ENCODE measurements at regions of chr5 and their contacts with region 1.

Region 1: GRCh38 chr5:178626484-178627258 is at the start of gene CLK4:
- DNase-seq: peak; percentile 98
- H3K4me3 ChIP-seq: peak within 1 kb of the TSS; percentile 62 to 95 (median 88)
- H3K27ac ChIP-seq: peak within 1 kb of the TSS; percentile 91 to 99 (median 98)
- H3K4me1 ChIP-seq: peaks cover 0 to 35% (median 31%) of the 10 kb centered on the region in 4 donors
- H3K27me3 ChIP-seq: no peaks in the 10 kb centered on the region
- CTCF ChIP-seq: no peak
- EP300 ChIP-seq: peak in 1 of 4 donors; percentile 3
- POLR2A ChIP-seq: peak; percentile 17 to 44
- total RNA-seq, gene CLK4: 31.8 to 51.8 (median 40.3) TPM

Region 2: DNA sequence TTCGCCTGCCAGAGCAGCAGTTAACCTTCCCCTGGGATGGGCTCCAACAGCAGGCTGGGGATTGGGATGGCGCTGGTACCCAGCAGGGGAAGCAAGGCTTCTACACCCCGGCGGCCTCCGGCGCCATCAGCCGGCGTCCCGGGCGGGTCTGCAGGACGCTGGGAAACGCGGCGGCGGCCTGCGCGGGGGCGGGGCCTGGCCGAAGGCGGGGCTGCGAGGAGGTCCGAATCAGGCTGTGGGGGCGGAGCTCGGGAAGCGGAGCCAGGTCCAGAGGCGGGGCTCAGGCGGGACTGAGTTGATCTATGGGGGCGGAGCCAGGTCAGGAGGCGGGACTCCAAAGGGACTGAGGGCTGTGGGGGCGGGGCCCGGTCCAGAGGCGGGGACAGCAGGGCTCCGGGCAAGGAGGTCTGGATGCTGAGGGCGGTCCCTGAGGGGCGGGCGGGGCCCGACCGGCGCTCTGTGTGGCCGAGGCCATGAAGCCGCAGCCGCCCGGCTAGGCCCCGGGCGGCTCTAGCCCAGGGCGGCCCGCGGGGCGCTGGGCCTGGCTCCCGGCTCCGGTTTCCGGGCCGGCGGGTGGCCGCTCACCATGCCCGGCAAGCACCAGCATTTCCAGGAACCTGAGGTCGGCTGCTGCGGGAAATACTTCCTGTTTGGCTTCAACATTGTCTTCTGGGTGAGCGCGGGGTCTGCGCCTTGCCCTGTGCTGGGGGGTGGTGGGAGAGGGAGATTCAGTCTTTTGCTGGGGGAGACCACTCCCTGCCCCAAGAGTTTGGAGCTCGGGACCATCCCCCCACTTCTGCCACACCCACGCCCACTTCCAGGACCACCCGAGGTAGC is 1979.4 kb before region 1 on chr5 and contains the start of gene TSPAN17:
- intact Hi-C with region 1: loop called (anchors 5 kb)
- DNase-seq: peak; percentile 100
- H3K4me3 ChIP-seq: peak within 1 kb of the TSS; percentile 61 to 85 (median 70)
- H3K27ac ChIP-seq: peak within 1 kb of the TSS; percentile 79 to 82 (median 82)
- H3K4me1 ChIP-seq: peaks cover 0 to 22% (median 20%) of the 10 kb centered on the region in 4 donors
- H3K27me3 ChIP-seq: no peaks in the 10 kb centered on the region
- CTCF ChIP-seq: peak in 1 of 4 experiments; percentile 11
- EP300 ChIP-seq: peak in 1 of 4 donors; percentile 9
- POLR2A ChIP-seq: peak; percentile 11 to 25
- total RNA-seq, gene TSPAN17: 7.4 to 22.4 (median 9.7) TPM

Region 3: GRCh38 chr5:178732281-178732680 is 105.6 kb after region 1 on chr5:
- intact Hi-C with region 1: loop called (anchors 2 kb)
- DNase-seq: no peak
- H3K4me3 ChIP-seq: no peak overlapping the region
- H3K27ac ChIP-seq: no peak overlapping the region
- H3K4me1 ChIP-seq: peaks cover 0 to 12% (median 7%) of the 10 kb centered on the region in 4 donors
- H3K27me3 ChIP-seq: no peaks in the 10 kb centered on the region
- CTCF ChIP-seq: no peak
- EP300 ChIP-seq: no peak
- POLR2A ChIP-seq: no peak

Region 4: DNA sequence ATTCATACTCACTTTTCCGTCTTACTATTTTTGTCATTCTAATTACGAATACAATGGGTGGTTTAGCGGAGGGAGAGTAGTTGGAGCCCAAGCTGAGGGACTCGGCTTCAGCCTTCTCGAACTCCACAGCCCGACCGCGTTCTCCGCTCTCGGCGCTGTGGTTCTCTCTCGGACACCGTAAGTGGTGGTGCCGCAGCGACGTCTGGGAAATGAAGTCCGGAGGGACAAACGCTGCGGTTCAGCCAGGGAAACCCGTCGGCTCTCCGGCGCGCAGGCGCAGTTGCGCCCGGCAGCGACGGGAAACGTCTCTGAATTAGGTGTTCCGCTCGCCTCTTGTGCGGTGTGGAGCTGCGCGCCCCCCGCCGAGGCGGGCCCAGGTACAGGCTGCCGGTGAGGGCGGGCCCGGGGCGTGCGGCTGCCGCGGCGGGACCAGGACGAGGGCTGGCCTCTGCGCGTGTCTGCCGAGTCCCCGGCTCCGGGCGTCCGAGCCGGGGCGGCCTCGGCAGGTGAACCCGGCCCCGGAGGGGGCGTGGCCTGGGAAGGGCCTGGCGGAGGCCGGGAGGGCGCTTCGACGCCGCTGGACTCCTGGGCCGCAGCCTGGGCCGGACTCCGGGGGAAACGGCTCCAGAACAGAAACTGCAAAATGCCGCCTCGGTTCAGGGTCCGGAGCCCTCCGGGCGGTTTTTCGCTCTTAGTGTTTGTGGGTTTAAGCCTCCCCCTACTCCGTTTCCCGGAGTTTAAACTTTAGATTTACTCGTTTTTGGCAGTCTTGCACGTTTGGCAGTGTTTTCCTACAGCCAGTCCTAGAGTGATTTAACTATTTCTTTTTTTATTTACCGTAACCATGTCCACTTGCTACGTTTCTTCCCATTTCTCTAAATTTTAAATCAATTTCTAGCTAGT is 397.1 kb after region 1 on chr5 and contains the start of gene ZNF879:
- intact Hi-C with region 1: loop called (anchors 10 kb)
- DNase-seq: peak; percentile 97
- H3K4me3 ChIP-seq: peak within 1 kb of the TSS; percentile 43 to 97 (median 86)
- H3K27ac ChIP-seq: peak within 1 kb of the TSS; percentile 84 to 89 (median 88)
- H3K4me1 ChIP-seq: peaks cover 0 to 11% (median 8%) of the 10 kb centered on the region in 4 donors
- H3K27me3 ChIP-seq: no peaks in the 10 kb centered on the region
- CTCF ChIP-seq: no peak
- EP300 ChIP-seq: no peak
- POLR2A ChIP-seq: no peak
- total RNA-seq, gene ZNF879: 2.8 to 6.3 (median 4.7) TPM

Region 5: DNA sequence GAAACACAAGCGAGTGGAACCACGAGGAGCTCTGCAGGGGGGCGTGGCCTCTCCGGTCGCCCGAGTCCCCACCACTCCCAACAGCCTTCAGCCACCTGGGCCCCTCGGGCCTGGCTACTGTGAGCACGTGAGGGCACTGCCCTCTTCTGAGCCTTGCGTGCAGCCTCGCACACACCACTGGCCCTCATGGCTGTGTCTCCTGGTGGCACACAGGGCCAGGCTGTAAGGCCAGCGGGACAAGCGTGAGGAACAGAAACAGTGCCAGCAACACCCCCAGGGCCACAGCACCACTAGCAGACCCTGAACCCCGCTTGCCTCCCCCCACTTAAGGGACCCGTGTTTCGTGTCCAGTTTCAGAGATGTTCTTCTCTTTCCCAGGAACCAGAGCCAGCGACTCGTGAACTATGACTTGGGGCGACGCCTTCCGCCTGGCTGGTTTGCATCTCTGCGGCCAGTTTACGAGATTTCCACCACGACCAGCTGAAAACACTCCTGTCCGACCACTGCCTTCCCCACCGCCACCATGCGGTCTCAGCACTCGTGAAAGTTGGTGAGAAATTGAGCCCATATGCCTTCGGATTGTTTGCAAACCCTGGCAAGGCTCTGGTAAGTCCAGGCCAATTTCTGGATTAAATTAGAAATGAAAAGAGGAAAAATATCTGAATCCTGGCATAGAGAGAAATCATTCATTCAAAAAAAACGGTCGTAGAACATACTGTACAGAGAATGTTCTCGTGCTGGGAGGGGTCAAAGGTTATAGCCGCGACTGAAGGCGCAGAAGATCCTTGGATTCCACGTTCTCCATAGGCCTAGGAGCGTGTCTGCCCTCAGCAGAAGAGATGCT is 569.1 kb after region 1 on chr5:
- intact Hi-C with region 1: no loop called
- DNase-seq: peak; percentile 54
- H3K4me3 ChIP-seq: no peak overlapping the region
- H3K27ac ChIP-seq: no peak overlapping the region
- H3K4me1 ChIP-seq: no peaks in the 10 kb centered on the region
- H3K27me3 ChIP-seq: no peaks in the 10 kb centered on the region
- CTCF ChIP-seq: no peak
- EP300 ChIP-seq: no peak
- POLR2A ChIP-seq: no peak

Region 6: DNA sequence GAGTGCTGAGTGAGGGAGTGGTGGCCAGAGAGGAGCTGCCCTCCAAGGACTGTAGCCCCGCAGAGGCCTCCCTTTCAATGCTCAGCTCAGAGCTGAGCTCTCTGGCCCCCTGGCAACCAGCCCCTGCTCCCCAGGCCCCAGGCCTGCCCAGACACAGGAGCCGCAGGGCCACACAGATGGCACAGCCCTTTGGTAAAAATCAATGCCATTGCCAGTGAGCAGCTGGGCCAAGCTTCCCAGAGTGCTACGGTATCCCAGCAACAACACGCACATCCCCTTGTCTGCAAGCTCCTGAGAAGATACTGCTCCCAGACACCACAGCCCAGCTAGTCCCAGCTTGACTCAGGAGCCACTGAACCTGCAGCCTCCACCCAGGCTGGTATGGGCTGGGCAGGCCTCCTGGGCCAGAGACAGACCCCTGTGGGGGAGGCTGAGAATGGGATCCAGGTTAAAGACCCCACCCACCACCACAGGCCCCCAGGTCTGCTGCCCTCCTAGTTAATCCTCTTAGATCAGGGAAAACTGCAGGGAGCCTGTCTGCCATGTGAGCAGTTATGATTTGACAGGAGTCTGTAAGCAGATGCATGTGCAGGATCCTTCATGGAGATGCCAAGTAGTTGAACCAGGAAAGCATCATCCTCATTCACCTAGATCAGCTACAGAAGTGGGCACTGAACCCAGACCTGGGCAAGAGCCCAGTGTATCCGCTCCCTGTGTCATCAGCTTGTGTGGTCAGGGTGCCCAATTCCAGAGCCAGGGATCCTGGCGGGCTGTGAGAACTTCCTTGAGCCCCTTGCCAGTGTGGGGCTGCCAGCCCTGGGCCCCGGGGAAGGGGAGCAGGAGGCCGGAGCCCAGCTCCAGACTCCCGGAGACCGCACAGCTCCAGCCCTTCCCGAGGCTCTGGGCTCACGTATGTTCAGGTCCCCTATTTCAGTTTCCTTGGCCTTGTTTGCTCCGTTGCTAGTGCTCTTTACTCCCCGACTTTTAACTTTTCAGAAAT is 745.3 kb after region 1 on chr5:
- intact Hi-C with region 1: no loop called
- DNase-seq: peak; percentile 48
- H3K4me3 ChIP-seq: no peak overlapping the region
- H3K27ac ChIP-seq: no peak overlapping the region
- H3K4me1 ChIP-seq: no peaks in the 10 kb centered on the region
- H3K27me3 ChIP-seq: no peaks in the 10 kb centered on the region
- CTCF ChIP-seq: no peak
- EP300 ChIP-seq: no peak
- POLR2A ChIP-seq: no peak

Region 7: DNA sequence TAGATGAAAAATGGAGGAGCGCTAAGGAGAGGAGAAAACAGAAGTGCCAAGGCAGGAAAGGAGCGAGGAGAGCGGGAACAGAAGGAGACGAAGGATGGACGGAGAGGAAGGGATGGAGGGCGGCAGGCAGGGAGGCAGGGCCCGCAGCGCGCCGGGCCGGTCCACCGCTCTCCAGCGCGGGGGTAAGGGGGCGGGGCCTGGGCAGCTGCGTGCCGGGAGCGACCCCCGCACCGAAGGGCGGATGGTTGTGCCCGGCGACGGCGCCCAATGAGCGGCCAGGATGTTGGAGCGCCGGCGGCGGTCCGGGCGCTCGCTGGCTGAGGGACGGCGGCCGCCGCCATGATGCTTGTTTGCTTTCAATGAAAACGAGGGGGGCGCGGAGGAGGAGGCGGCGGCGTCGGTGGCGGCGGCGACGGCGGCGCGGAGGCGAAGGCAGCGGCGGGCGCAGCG is 1867.4 kb after region 1 on chr5 and contains the start of gene CNOT6:
- intact Hi-C with region 1: loop called (anchors 5 kb)
- DNase-seq: peak; percentile 95
- H3K4me3 ChIP-seq: peak within 1 kb of the TSS; percentile 82 to 94 (median 88)
- H3K27ac ChIP-seq: peak within 1 kb of the TSS; percentile 90 to 95 (median 94)
- H3K4me1 ChIP-seq: peaks cover 0 to 33% (median 24%) of the 10 kb centered on the region in 4 donors
- H3K27me3 ChIP-seq: no peaks in the 10 kb centered on the region
- CTCF ChIP-seq: no peak
- EP300 ChIP-seq: no peak
- POLR2A ChIP-seq: no peak
- total RNA-seq, gene CNOT6: 16.0 to 21.8 (median 17.8) TPM

Measured in sigmoid colon (tissue), 7 donors.